Heart right ventricle (tissue), 16 donors: ENCODE measurements at regions of chr14 and their contacts with region 1.

Region 1: GRCh38 chr14:76863724-76864407 is 37.7 kb downstream of the LRRC74A start:
- DNase-seq: peak; percentile 48 to 86
- ATAC-seq: peak; percentile 79 to 93 (median 90)
- H3K4me3 ChIP-seq: peak overlapping the region in 8 of 10 donors; percentile 21 to 56 (median 43)
- H3K27ac ChIP-seq: peak overlapping the region; percentile 36 to 92 (median 84)
- H3K4me1 ChIP-seq: peaks cover 8 to 70% (median 51%) of the 10 kb centered on the region in 9 donors
- H3K27me3 ChIP-seq: no peaks in the 10 kb centered on the region
- CTCF ChIP-seq: no peak

Region 2: GRCh38 chr14:76564471-76565422 is 299.1 kb before region 1 on chr14:
- intact Hi-C with region 1: no loop called
- DNase-seq: no peak
- ATAC-seq: no peak
- H3K4me3 ChIP-seq: no peak overlapping the region
- H3K27ac ChIP-seq: no peak overlapping the region
- H3K4me1 ChIP-seq: no peaks in the 10 kb centered on the region
- H3K27me3 ChIP-seq: peaks cover 0 to 5% (median 0%) of the 10 kb centered on the region in 7 donors
- CTCF ChIP-seq: no peak

Region 3: GRCh38 chr14:76773188-76773885 is 90.5 kb before region 1 on chr14:
- intact Hi-C with region 1: no loop called
- DNase-seq: peak; percentile 60 to 75
- ATAC-seq: peak in 7 of 8 donors; percentile 57 to 72 (median 65)
- H3K4me3 ChIP-seq: peak overlapping the region in 1 of 10 donors; percentile 14
- H3K27ac ChIP-seq: peak overlapping the region; percentile 38 to 95 (median 80)
- H3K4me1 ChIP-seq: peaks cover 29 to 93% (median 70%) of the 10 kb centered on the region in 9 donors
- H3K27me3 ChIP-seq: peaks cover 0 to 3% (median 0%) of the 10 kb centered on the region in 7 donors
- CTCF ChIP-seq: peak in 1 of 9 donors; percentile 27

Region 4: GRCh38 chr14:76812211-76813044 is 51.4 kb before region 1 on chr14 and contains the start of gene ANGEL1:
- intact Hi-C with region 1: loop called in 1 of 10 experiments (anchors 5 kb)
- DNase-seq: peak; percentile 96 to 97
- ATAC-seq: peak; percentile 93 to 96 (median 95)
- H3K4me3 ChIP-seq: peak within 1 kb of the TSS; percentile 82 to 98 (median 90)
- H3K27ac ChIP-seq: peak within 1 kb of the TSS; percentile 71 to 97 (median 92)
- H3K4me1 ChIP-seq: peaks cover 0 to 33% (median 25%) of the 10 kb centered on the region in 9 donors
- H3K27me3 ChIP-seq: no peaks in the 10 kb centered on the region
- CTCF ChIP-seq: no peak
- total RNA-seq, gene ANGEL1: 9.2 to 17.1 (median 12.9) TPM

Region 5: GRCh38 chr14:76844223-76844622 is 19.6 kb before region 1 on chr14:
- intact Hi-C with region 1: loop called in 1 of 10 experiments (anchors 2 kb)
- DNase-seq: peak; percentile 68 to 88
- ATAC-seq: peak; percentile 94 to 99 (median 98)
- H3K4me3 ChIP-seq: no peak overlapping the region
- H3K27ac ChIP-seq: peak overlapping the region; percentile 66 to 91 (median 87)
- H3K4me1 ChIP-seq: peaks cover 0 to 32% (median 7%) of the 10 kb centered on the region in 9 donors
- H3K27me3 ChIP-seq: peaks cover 0 to 8% (median 0%) of the 10 kb centered on the region in 7 donors
- CTCF ChIP-seq: peak in 8 of 9 donors; percentile 7 to 46 (median 37)